ENCODE measurements at regions of chr12 and their contacts with region 1.

Region 1: GRCh38 chr12:100554608-100555077 is 18.8 kb upstream of the GAS2L3 start:
- DNase-seq: peak in 1 of 5 donors; percentile 41
- H3K4me3 ChIP-seq: no peak overlapping the region
- H3K27ac ChIP-seq: no peak overlapping the region
- H3K4me1 ChIP-seq: peaks cover 3% of the 10 kb centered on the region
- H3K27me3 ChIP-seq: no peaks in the 10 kb centered on the region
- CTCF ChIP-seq: peak; percentile 82 to 99 (median 99)
- EP300 ChIP-seq: no peak
- POLR2A ChIP-seq: no peak

Region 2: GRCh38 chr12:100234598-100235304 is 319.9 kb before region 1 on chr12:
- intact Hi-C with region 1: loop called in 3 of 4 experiments (anchors 10 kb)
- DNase-seq: no peak
- H3K4me3 ChIP-seq: no peak overlapping the region
- H3K27ac ChIP-seq: no peak overlapping the region
- H3K4me1 ChIP-seq: peaks cover 1% of the 10 kb centered on the region
- H3K27me3 ChIP-seq: no peaks in the 10 kb centered on the region
- CTCF ChIP-seq: peak; percentile 23 to 51 (median 47)
- EP300 ChIP-seq: no peak
- POLR2A ChIP-seq: no peak

Region 3: GRCh38 chr12:100348657-100349454 is 205.8 kb before region 1 on chr12:
- intact Hi-C with region 1: loop called (anchors 5 to 10 kb)
- DNase-seq: no peak
- H3K4me3 ChIP-seq: no peak overlapping the region
- H3K27ac ChIP-seq: no peak overlapping the region
- H3K4me1 ChIP-seq: no peaks in the 10 kb centered on the region
- H3K27me3 ChIP-seq: no peaks in the 10 kb centered on the region
- CTCF ChIP-seq: peak in 2 of 3 donors; percentile 42 to 47
- EP300 ChIP-seq: no peak
- POLR2A ChIP-seq: no peak

Region 4: GRCh38 chr12:100356644-100357223 is 197.9 kb before region 1 on chr12 and contains the start of gene SLC17A8:
- intact Hi-C with region 1: loop called in 2 of 4 experiments (anchors 5 to 10 kb)
- DNase-seq: no peak
- H3K4me3 ChIP-seq: no peak within 1 kb of the TSS
- H3K27ac ChIP-seq: no peak within 1 kb of the TSS
- H3K4me1 ChIP-seq: no peaks in the 10 kb centered on the region
- H3K27me3 ChIP-seq: no peaks in the 10 kb centered on the region
- CTCF ChIP-seq: no peak
- EP300 ChIP-seq: no peak
- POLR2A ChIP-seq: no peak
- total RNA-seq, gene SLC17A8: 0.08 to 0.45 (median 0.29) TPM in 4 of 7 donors, not detected in the others

Measured in ovary (tissue), 10 donors.